Natural killer cell (primary cell): ENCODE measurements at regions of chr3 and their contacts with region 1.

Region 1: GRCh38 chr3:12663936-12664908 is at the start of gene RAF1:
- DNase-seq: peak; percentile 97 to 99
- ATAC-seq: peak; percentile 93 to 99 (median 94)
- H3K4me3 ChIP-seq: peak within 1 kb of the TSS; percentile 89
- H3K4me3 Mint-ChIP-seq: peak within 1 kb of the TSS; percentile 100
- H3K27ac ChIP-seq: peak within 1 kb of the TSS; percentile 89
- H3K27ac Mint-ChIP-seq: peak within 1 kb of the TSS; percentile 97 to 98
- H3K4me1 ChIP-seq: peaks cover 27% of the 10 kb centered on the region
- H3K4me1 Mint-ChIP-seq: peaks cover 34 to 37% of the 10 kb centered on the region in 2 donors
- H3K27me3 ChIP-seq: no peaks in the 10 kb centered on the region
- H3K27me3 Mint-ChIP-seq: no peaks in the 10 kb centered on the region
- CTCF ChIP-seq: no peak
- total RNA-seq, gene RAF1: 142 to 168 (median 156) TPM

Region 2: GRCh38 chr3:12556671-12557472 is 107.3 kb before region 1 on chr3 and contains the start of gene MKRN2:
- intact Hi-C with region 1: loop called (anchors 1 kb)
- DNase-seq: peak; percentile 84 to 93
- ATAC-seq: peak; percentile 95 to 99 (median 96)
- H3K4me3 ChIP-seq: peak within 1 kb of the TSS; percentile 70
- H3K4me3 Mint-ChIP-seq: peak within 1 kb of the TSS; percentile 90
- H3K27ac ChIP-seq: peak within 1 kb of the TSS; percentile 92
- H3K27ac Mint-ChIP-seq: peak within 1 kb of the TSS; percentile 71 to 90
- H3K4me1 ChIP-seq: peaks cover 20% of the 10 kb centered on the region
- H3K4me1 Mint-ChIP-seq: peaks cover 63 to 64% of the 10 kb centered on the region in 2 donors
- H3K27me3 ChIP-seq: peaks cover 18% of the 10 kb centered on the region
- H3K27me3 Mint-ChIP-seq: peaks cover 22 to 25% of the 10 kb centered on the region in 2 donors
- CTCF ChIP-seq: no peak
- total RNA-seq, gene MKRN2: 23.9 to 31.7 (median 29.4) TPM

Region 3: GRCh38 chr3:12613250-12613649 is 51.0 kb before region 1 on chr3:
- intact Hi-C with region 1: loop called (anchors 2 kb)
- DNase-seq: peak in 1 of 2 donors; percentile 29
- ATAC-seq: peak; percentile 41 to 59 (median 57)
- H3K4me3 ChIP-seq: no peak overlapping the region
- H3K4me3 Mint-ChIP-seq: no peak overlapping the region
- H3K27ac ChIP-seq: no peak overlapping the region
- H3K27ac Mint-ChIP-seq: peak overlapping the region; percentile 72 to 80
- H3K4me1 ChIP-seq: peaks cover 19% of the 10 kb centered on the region
- H3K4me1 Mint-ChIP-seq: peaks cover 32 to 51% of the 10 kb centered on the region in 2 donors
- H3K27me3 ChIP-seq: no peaks in the 10 kb centered on the region
- H3K27me3 Mint-ChIP-seq: no peaks in the 10 kb centered on the region
- CTCF ChIP-seq: no peak

Region 4: DNA sequence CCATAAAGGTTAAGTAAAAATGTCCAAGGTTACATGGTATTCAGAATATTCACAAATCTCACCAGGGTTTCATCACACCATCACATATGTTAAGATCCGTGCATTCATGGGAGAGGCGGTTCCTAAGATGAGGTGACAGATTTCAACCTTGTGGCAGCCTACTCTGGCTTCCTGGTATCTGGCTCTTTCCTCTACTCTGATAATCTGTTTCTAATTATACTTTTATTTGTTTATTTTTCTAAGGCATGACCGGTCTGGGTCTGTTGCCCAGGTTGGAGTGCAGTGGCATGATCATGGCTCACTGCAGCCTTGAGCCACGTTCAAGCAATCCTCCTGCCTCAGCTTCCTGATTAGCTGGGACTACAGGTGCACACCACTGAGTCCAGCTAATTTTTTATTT is 34.7 kb before region 1 on chr3:
- intact Hi-C with region 1: loop called (anchors 5 kb)
- DNase-seq: no peak
- ATAC-seq: peak in 1 of 3 donors; percentile 50
- H3K4me3 ChIP-seq: no peak overlapping the region
- H3K4me3 Mint-ChIP-seq: no peak overlapping the region
- H3K27ac ChIP-seq: no peak overlapping the region
- H3K27ac Mint-ChIP-seq: no peak overlapping the region
- H3K4me1 ChIP-seq: peaks cover 11% of the 10 kb centered on the region
- H3K4me1 Mint-ChIP-seq: peaks cover 34 to 46% of the 10 kb centered on the region in 2 donors
- H3K27me3 ChIP-seq: no peaks in the 10 kb centered on the region
- H3K27me3 Mint-ChIP-seq: no peaks in the 10 kb centered on the region
- CTCF ChIP-seq: no peak

Region 5: GRCh38 chr3:12719984-12720898 is 56.0 kb after region 1 on chr3:
- intact Hi-C with region 1: loop called (anchors 2 kb)
- DNase-seq: peak; percentile 59 to 89
- ATAC-seq: peak; percentile 97 to 99 (median 98)
- H3K4me3 ChIP-seq: no peak overlapping the region
- H3K4me3 Mint-ChIP-seq: peak overlapping the region; percentile 56
- H3K27ac ChIP-seq: no peak overlapping the region
- H3K27ac Mint-ChIP-seq: peak overlapping the region; percentile 43 to 85
- H3K4me1 ChIP-seq: peaks cover 7% of the 10 kb centered on the region
- H3K4me1 Mint-ChIP-seq: peaks cover 13 to 15% of the 10 kb centered on the region in 2 donors
- H3K27me3 ChIP-seq: no peaks in the 10 kb centered on the region
- H3K27me3 Mint-ChIP-seq: peaks cover 0 to 5% of the 10 kb centered on the region in 2 donors
- CTCF ChIP-seq: peak; percentile 92

Region 6: DNA sequence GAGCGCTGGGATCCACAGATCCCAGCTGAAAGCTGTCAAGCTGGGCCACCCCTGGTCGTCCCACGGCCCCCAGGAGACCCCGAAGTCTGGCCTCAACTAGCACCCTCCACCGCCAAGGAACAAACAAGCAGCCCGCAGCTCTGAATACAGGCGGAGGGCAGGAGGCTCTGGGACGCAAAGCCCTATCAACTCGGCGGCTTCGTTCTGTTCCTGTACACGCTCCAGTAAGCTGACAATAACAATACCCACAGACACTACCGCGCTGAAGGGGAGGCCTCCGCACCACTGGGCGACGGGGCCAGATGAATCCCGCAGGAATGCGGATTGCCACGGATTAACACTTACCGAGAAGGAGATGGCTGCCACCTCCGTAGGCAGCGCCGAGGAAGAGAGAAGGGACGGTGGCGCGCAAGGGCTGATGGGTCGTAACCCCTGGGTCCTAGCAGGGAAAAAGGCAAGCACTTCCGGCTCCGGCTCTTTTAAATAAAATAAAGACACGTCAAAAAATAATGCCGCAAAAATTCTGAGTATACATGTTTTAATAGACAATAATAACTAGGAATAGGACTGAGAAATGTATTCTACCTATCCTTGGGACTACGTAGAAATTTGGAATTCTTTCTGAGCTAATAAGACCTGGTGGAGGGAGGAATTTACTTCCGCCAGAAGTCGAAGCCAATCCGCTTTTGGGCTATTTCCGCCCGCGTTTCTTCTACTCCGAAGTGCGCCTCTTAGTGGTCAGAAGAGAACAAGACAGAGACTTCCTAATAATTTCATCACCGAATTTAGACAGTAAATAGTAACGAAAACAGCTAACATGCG is 177.1 kb after region 1 on chr3 and contains the start of gene RPL32:
- intact Hi-C with region 1: loop called (anchors 1 kb)
- DNase-seq: peak; percentile 80 to 97
- ATAC-seq: peak; percentile 93 to 96 (median 93)
- H3K4me3 ChIP-seq: peak within 1 kb of the TSS; percentile 89
- H3K4me3 Mint-ChIP-seq: peak within 1 kb of the TSS; percentile 94
- H3K27ac ChIP-seq: peak within 1 kb of the TSS; percentile 94
- H3K27ac Mint-ChIP-seq: peak within 1 kb of the TSS; percentile 97 to 99
- H3K4me1 ChIP-seq: peaks cover 27% of the 10 kb centered on the region
- H3K4me1 Mint-ChIP-seq: peaks cover 49 to 53% of the 10 kb centered on the region in 2 donors
- H3K27me3 ChIP-seq: no peaks in the 10 kb centered on the region
- H3K27me3 Mint-ChIP-seq: no peaks in the 10 kb centered on the region
- CTCF ChIP-seq: peak; percentile 79
- total RNA-seq, gene RPL32: 1,034 to 1,328 (median 1,277) TPM

Region 7: GRCh38 chr3:14431892-14432834 is 1767.9 kb after region 1 on chr3:
- intact Hi-C with region 1: loop called (anchors 5 kb)
- DNase-seq: peak; percentile 91 to 96
- ATAC-seq: peak; percentile 75 to 93 (median 85)
- H3K4me3 ChIP-seq: peak overlapping the region; percentile 15
- H3K4me3 Mint-ChIP-seq: peak overlapping the region; percentile 73
- H3K27ac ChIP-seq: peak overlapping the region; percentile 97
- H3K27ac Mint-ChIP-seq: peak overlapping the region; percentile 96 to 97
- H3K4me1 ChIP-seq: peaks cover 96% of the 10 kb centered on the region
- H3K4me1 Mint-ChIP-seq: peaks cover 76 to 85% of the 10 kb centered on the region in 2 donors
- H3K27me3 ChIP-seq: no peaks in the 10 kb centered on the region
- H3K27me3 Mint-ChIP-seq: no peaks in the 10 kb centered on the region
- CTCF ChIP-seq: no peak